Pancreas (tissue), 10 donors: ENCODE measurements at regions of chr13 and their contacts with region 1.

Region 1: DNA sequence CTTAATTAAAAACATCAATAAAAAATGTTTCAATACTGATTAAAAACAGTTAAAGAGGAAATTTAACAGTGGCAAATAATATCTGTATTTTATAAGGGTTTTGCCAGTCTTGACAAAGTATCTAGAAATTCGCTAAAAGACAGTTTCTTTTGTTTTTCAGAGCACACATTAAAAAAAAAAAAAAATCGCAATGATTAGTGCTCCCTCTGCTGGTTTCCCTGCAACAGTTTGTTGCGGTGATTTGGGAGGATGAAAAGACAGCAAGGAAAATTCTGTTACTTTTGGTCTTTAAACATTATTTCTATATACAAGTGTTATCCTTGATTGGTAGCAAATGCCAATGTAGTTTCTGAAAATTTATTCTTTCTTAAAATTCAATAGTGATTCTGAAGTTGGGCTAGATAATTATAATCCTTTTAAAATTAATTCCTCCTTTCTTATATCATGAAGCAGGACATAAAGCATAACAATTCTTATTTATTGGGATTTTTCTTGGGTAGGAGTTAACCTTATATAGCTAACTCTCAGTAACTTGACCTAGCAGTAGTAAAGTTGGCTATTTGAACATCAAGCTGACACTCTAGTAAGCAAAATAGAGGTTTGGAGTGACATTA is 23.1 kb upstream of the SPRY2 start:
- DNase-seq: no peak
- ATAC-seq: peak in 3 of 4 donors; percentile 58 to 68 (median 63)
- H3K4me3 ChIP-seq: peak overlapping the region in 1 of 4 donors; percentile 7
- H3K27ac ChIP-seq: no peak overlapping the region
- H3K4me1 ChIP-seq: peaks cover 0 to 7% (median 4%) of the 10 kb centered on the region in 3 donors
- H3K27me3 ChIP-seq: no peaks in the 10 kb centered on the region
- CTCF ChIP-seq: peak; percentile 46 to 73 (median 58)

Region 2: GRCh38 chr13:79681069-79681468 is 682.9 kb before region 1 on chr13:
- intact Hi-C with region 1: loop called in 1 of 3 experiments (anchors 10 kb)
- DNase-seq: no peak
- ATAC-seq: no peak
- H3K4me3 ChIP-seq: no peak overlapping the region
- H3K27ac ChIP-seq: no peak overlapping the region
- H3K4me1 ChIP-seq: peaks cover 0 to 4% (median 3%) of the 10 kb centered on the region in 3 donors
- H3K27me3 ChIP-seq: no peaks in the 10 kb centered on the region
- CTCF ChIP-seq: no peak

Region 3: GRCh38 chr13:79775830-79776229 is 588.2 kb before region 1 on chr13:
- intact Hi-C with region 1: loop called in 1 of 3 experiments (anchors 10 kb)
- DNase-seq: peak in 2 of 6 donors; percentile 21 to 39
- ATAC-seq: peak; percentile 68 to 90 (median 82)
- H3K4me3 ChIP-seq: no peak overlapping the region
- H3K27ac ChIP-seq: no peak overlapping the region
- H3K4me1 ChIP-seq: peaks cover 0 to 3% (median 0%) of the 10 kb centered on the region in 3 donors
- H3K27me3 ChIP-seq: no peaks in the 10 kb centered on the region
- CTCF ChIP-seq: peak in 3 of 4 donors; percentile 37 to 39 (median 38)

Region 4: GRCh38 chr13:80029170-80029569 is 334.8 kb before region 1 on chr13:
- intact Hi-C with region 1: no loop called
- DNase-seq: peak in 5 of 6 donors; percentile 11 to 41 (median 34)
- ATAC-seq: peak; percentile 65 to 84 (median 70)
- H3K4me3 ChIP-seq: no peak overlapping the region
- H3K27ac ChIP-seq: no peak overlapping the region
- H3K4me1 ChIP-seq: peaks cover 2 to 7% (median 6%) of the 10 kb centered on the region in 3 donors
- H3K27me3 ChIP-seq: no peaks in the 10 kb centered on the region
- CTCF ChIP-seq: no peak

Region 5: DNA sequence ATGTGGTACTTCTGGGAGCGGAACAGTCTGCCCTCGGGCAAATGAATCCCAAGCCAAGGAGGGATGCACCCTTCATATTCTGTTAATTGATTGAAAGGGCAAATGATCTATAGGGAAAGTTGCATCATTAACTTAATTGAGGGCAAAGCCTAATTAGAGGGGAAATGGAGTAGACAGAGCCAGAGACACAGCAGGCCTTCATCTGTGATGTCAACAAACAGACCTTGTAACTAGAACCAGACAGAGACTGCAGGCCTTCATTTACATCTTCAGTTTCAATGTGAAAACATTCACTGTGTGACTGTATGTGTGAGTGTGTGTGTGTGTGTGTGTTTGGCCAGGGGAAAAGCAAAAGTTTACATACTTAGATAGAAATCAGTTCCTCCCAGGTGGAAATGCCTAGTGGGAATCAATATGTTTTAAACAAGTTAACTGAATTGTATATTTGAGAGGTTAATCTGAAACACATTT is 149.4 kb before region 1 on chr13:
- intact Hi-C with region 1: no loop called
- DNase-seq: no peak
- ATAC-seq: no peak
- H3K4me3 ChIP-seq: no peak overlapping the region
- H3K27ac ChIP-seq: no peak overlapping the region
- H3K4me1 ChIP-seq: no peaks in the 10 kb centered on the region
- H3K27me3 ChIP-seq: no peaks in the 10 kb centered on the region
- CTCF ChIP-seq: no peak

Region 6: GRCh38 chr13:80551650-80552497 is 187.9 kb after region 1 on chr13:
- intact Hi-C with region 1: no loop called
- DNase-seq: no peak
- ATAC-seq: no peak
- H3K4me3 ChIP-seq: no peak overlapping the region
- H3K27ac ChIP-seq: no peak overlapping the region
- H3K4me1 ChIP-seq: no peaks in the 10 kb centered on the region
- H3K27me3 ChIP-seq: no peaks in the 10 kb centered on the region
- CTCF ChIP-seq: no peak